Panc1 (cell line): ENCODE measurements at regions of chrX and their contacts with region 1.

Region 1: GRCh38 chrX:37745354-37745753 is 34.5 kb upstream of the CYBB start:
- DNase-seq: peak; percentile 18
- ATAC-seq: peak; percentile 66; the same call in 1 of the 2 replicates
- H3K4me3 ChIP-seq: no peak overlapping the region
- H3K27ac ChIP-seq: no peak overlapping the region
- H3K4me1 ChIP-seq: no peaks in the 10 kb centered on the region
- H3K27me3 ChIP-seq: no peaks in the 10 kb centered on the region
- CTCF ChIP-seq: peak; percentile 78

Region 2: DNA sequence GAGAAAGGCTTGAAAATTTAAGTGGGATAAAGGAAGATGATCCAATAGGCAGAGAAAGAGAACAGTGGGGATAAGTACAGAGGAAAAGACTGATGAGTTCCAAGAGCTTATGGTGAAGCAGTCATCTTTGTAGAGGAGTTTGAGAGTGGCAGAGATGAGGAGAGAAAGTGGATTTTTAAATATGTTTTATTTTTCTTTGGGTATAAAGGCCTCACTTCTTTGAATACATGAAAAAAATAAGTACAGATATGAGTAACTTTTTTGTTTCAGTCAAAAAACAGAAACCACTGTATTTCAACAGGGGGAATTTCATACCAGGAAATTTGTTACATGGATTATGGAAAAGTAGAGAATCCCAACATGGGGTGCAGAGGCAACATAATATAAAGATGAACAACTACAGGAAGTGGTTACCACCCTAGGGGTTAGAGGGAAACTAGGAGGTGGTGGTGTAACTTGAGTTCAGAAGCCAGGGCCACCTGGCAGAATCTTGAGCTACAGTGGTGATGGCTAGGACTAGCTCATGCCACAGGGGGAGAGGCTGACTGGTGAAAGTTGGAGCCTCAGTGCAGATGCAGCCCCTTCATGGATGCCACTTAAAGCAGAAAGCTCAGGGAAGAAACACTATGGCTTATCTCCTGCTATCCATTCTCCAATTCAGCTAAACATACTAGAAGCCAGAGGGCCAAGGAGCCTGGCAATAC is 31.1 kb after region 1 on chrX:
- CTCF ChIA-PET with region 1: no interaction called
- POLR2A ChIA-PET with region 1: no interaction called
- in situ Hi-C with region 1: no loop called
- intact Hi-C with region 1: no loop called
- DNase-seq: no peak
- ATAC-seq: no peak
- H3K4me3 ChIP-seq: no peak overlapping the region
- H3K27ac ChIP-seq: no peak overlapping the region
- H3K4me1 ChIP-seq: no peaks in the 10 kb centered on the region
- H3K27me3 ChIP-seq: no peaks in the 10 kb centered on the region
- CTCF ChIP-seq: no peak

Region 3: DNA sequence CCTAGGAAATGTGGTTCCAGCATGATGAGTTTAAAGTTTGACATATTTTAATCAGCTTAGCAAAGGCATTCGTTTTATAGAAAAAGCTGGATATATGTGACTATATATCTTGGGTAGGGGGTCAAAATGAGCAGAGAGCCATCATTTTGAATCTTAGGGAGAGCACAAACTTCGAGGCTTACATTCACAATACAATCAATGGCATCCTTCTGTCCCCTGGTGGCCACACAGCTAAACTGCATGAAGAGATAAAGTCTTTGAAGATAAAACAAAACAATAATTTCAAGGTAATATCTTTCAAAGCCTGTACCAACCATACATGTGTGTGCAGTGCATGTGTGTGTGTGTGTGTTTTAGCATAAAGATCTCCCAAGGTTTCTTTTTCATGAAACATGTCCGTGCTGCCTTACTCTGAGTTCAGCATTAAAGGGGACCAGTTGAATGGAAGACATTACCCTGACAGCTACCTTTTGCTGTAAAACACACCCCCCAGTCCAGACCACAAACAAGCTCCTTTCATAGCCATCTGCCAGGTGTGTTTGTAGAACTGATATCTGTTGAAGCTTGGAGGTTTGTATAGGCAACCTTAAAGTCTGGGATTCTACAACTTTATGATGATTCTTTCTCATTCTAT is 80.0 kb after region 1 on chrX:
- CTCF ChIA-PET with region 1: interaction called, 3 read pairs
- POLR2A ChIA-PET with region 1: no interaction called
- in situ Hi-C with region 1: no loop called
- intact Hi-C with region 1: loop called (anchors 2 kb)
- DNase-seq: no peak
- ATAC-seq: no peak
- H3K4me3 ChIP-seq: no peak overlapping the region
- H3K27ac ChIP-seq: no peak overlapping the region
- H3K4me1 ChIP-seq: no peaks in the 10 kb centered on the region
- H3K27me3 ChIP-seq: no peaks in the 10 kb centered on the region
- CTCF ChIP-seq: peak; percentile 80

Region 4: GRCh38 chrX:38151441-38151840 is 406.1 kb after region 1 on chrX:
- CTCF ChIA-PET with region 1: no interaction called
- POLR2A ChIA-PET with region 1: no interaction called
- in situ Hi-C with region 1: no loop called
- intact Hi-C with region 1: no loop called
- DNase-seq: no peak
- ATAC-seq: no peak
- H3K4me3 ChIP-seq: no peak overlapping the region
- H3K27ac ChIP-seq: no peak overlapping the region
- H3K4me1 ChIP-seq: no peaks in the 10 kb centered on the region
- H3K27me3 ChIP-seq: no peaks in the 10 kb centered on the region
- CTCF ChIP-seq: no peak

Region 5: GRCh38 chrX:38175140-38175539 is 429.8 kb after region 1 on chrX:
- CTCF ChIA-PET with region 1: no interaction called
- POLR2A ChIA-PET with region 1: no interaction called
- in situ Hi-C with region 1: no loop called
- intact Hi-C with region 1: loop called (anchors 5 kb)
- DNase-seq: no peak
- ATAC-seq: peak; percentile 82
- H3K4me3 ChIP-seq: no peak overlapping the region
- H3K27ac ChIP-seq: no peak overlapping the region
- H3K4me1 ChIP-seq: no peaks in the 10 kb centered on the region
- H3K27me3 ChIP-seq: no peaks in the 10 kb centered on the region
- CTCF ChIP-seq: peak; percentile 74